Activated naive CD4-positive, alpha-beta T cell treated with anti-CD3 and anti-CD28 coated beads, Interleukin-2, amount 10 ng/mL, durations not matched to agents 7 days and 5 days (primary cell): ENCODE measurements at regions of chr7 and their contacts with region 1.

Region 1: DNA sequence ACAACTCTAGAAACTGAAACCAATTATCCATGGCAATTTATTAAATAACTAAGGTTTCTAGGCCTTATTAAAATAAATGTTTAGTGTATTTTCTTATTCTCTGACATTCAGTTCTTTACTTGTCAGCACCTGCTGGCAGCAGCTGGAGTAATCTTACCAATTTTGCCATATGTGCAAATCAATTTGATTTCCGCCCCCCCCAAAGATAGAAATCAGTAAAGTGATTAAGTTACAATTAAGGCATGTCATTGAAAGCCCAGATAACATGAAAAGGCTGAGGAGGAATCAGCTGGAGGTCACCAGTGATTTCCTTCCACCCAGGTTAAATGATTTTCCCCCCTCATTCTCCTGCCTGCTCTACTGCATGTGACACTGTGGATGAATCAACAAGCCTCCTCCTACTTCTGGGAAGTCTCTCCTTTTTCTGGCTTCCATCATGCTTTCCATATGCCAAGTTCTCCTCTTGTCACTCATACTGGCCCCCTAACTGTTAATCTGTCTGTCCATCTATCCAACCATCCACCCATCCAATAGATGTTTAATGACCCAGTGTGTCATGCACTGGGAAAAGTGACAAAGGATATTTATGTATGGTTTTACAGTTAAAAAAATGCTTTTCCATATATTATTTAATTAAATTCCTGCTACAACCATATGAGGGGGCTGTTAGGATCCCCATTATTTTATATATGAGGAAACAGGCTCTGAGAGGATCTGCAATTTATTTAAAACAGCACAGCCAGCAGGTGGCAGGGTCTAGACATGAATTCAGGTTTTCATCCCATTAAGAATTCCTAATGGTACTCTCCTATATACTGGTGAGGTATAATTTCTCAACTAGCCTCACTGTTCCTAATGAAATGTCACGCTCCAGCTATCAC is 116.5 kb downstream of the ATXN7L1 start:
- DNase-seq: peak; percentile 38
- H3K4me3 Mint-ChIP-seq: no peak overlapping the region
- H3K27ac Mint-ChIP-seq: peak overlapping the region; percentile 20
- H3K4me1 Mint-ChIP-seq: peaks cover 40% of the 10 kb centered on the region
- H3K27me3 Mint-ChIP-seq: peaks cover 14% of the 10 kb centered on the region

Region 2: DNA sequence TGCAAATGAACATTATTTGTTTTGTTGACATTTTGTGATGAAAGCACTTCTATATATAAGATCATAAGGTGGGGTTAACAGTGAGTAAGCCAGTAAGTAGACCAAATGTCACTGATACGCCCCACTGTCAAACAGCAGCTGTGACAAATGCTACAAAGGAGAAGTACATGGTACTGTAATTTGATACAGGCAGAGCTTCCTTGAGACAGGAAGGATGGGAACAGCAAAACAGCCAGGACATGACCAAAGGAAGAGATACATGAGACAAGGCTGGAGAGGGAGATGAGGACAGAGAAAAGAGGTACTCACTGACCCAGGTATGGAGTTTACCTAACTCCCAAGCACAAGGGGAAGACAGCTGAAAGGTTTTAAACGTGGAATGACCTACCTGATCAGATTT is 498.2 kb before region 1 on chr7:
- CTCF ChIA-PET with region 1: no interaction called
- DNase-seq: no peak
- H3K4me3 Mint-ChIP-seq: no peak overlapping the region
- H3K27ac Mint-ChIP-seq: no peak overlapping the region
- H3K4me1 Mint-ChIP-seq: peaks cover 12% of the 10 kb centered on the region
- H3K27me3 Mint-ChIP-seq: no peaks in the 10 kb centered on the region

Region 3: GRCh38 chr7:105678811-105679495 is 81.0 kb before region 1 on chr7:
- CTCF ChIA-PET with region 1: interaction called, 12 read pairs
- DNase-seq: peak; percentile 56
- H3K4me3 Mint-ChIP-seq: peak overlapping the region; percentile 83
- H3K27ac Mint-ChIP-seq: peak overlapping the region; percentile 94
- H3K4me1 Mint-ChIP-seq: peaks cover 58% of the 10 kb centered on the region
- H3K27me3 Mint-ChIP-seq: no peaks in the 10 kb centered on the region

Region 4: DNA sequence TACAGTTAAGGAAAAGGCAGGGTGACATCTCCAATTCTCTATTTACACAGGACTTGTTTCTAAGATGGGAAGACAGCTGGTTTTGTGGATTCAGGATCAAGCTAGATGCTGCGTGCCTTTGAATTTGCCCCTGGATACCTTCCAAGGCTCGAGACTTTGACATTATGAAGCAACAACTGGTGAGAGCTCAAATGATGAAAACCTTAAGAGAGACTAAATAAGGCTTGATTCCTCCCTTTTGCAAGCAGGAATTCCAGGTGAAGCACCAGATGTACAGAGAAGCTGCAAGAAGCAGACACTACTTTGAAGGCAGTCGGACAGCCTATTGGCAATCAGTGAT is 35.5 kb after region 1 on chr7:
- CTCF ChIA-PET with region 1: no interaction called
- DNase-seq: no peak
- H3K4me3 Mint-ChIP-seq: no peak overlapping the region
- H3K27ac Mint-ChIP-seq: no peak overlapping the region
- H3K4me1 Mint-ChIP-seq: peaks cover 11% of the 10 kb centered on the region
- H3K27me3 Mint-ChIP-seq: peaks cover 3% of the 10 kb centered on the region

Region 5: GRCh38 chr7:105808703-105809590 is 49.0 kb after region 1 on chr7:
- CTCF ChIA-PET with region 1: interaction called, 15 read pairs
- DNase-seq: peak; percentile 87
- H3K4me3 Mint-ChIP-seq: peak overlapping the region; percentile 0
- H3K27ac Mint-ChIP-seq: peak overlapping the region; percentile 95
- H3K4me1 Mint-ChIP-seq: peaks cover 63% of the 10 kb centered on the region
- H3K27me3 Mint-ChIP-seq: peaks cover 6% of the 10 kb centered on the region

Region 6: GRCh38 chr7:105924945-105925344 is 165.0 kb after region 1 on chr7:
- CTCF ChIA-PET with region 1: interaction called, 14 read pairs
- DNase-seq: peak; percentile 59
- H3K4me3 Mint-ChIP-seq: peak overlapping the region; percentile 0
- H3K27ac Mint-ChIP-seq: peak overlapping the region; percentile 94
- H3K4me1 Mint-ChIP-seq: peaks cover 42% of the 10 kb centered on the region
- H3K27me3 Mint-ChIP-seq: peaks cover 11% of the 10 kb centered on the region

Region 7: GRCh38 chr7:106041140-106041717 is 281.3 kb after region 1 on chr7:
- CTCF ChIA-PET with region 1: interaction called, 88 read pairs
- DNase-seq: peak; percentile 46
- H3K4me3 Mint-ChIP-seq: no peak overlapping the region
- H3K27ac Mint-ChIP-seq: no peak overlapping the region
- H3K4me1 Mint-ChIP-seq: peaks cover 33% of the 10 kb centered on the region
- H3K27me3 Mint-ChIP-seq: peaks cover 57% of the 10 kb centered on the region